ENCODE measurements at regions of chr17 and their contacts with region 1.

Region 1: DNA sequence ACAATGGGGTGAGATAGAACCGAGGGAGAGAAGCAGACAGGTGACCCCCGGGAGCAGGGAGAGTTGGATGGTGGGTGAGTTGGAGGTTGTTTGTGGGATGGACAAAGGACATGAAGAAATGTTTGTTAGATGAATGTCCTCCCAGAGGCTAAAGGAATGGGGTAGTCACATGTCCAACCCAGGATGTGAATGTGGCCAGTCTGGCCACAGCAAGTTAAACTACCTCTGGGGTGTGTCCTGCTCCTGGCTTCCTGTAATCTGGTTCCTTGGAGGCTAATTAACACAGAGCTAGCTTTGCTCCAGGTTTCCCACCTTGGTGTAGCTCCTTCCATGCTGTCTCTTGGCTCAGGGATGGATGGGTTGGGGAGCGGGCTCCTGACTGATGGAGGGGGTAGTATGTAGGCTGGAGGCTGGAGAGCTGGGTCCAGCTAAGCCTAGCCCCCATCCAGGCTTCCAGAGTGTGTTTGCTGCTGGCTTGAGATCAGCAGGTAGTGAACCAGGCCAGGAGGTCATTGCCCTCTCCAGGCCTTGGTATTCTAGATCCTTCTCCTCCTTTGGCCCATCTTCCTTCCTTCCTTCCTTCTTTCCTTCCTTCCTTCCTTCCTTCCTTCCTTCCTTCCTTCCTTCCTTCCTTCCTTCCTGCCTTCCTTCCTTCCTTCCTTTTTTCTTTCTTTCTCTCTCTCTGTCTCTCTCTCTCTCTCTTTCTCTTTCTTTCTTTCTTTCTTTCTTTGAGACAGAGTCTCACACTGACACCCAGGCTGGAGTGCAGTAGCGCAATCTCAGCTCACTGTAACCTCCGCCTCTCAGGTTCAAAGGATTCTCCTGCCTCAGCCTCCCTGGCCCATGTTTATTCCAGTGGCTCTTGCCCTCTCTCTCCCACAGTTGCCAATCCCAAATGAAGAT is 28.0 kb upstream of the UBE2G1 start:
- DNase-seq: no peak

Region 2: GRCh38 chr17:4187076-4187475 is 207.4 kb before region 1 on chr17:
- intact Hi-C with region 1: no loop called
- DNase-seq: no peak

Region 3: GRCh38 chr17:5275287-5275686 is 880.8 kb after region 1 on chr17:
- intact Hi-C with region 1: loop called in 1 of 2 experiments (anchors 5 kb)
- DNase-seq: no peak